Panc1 (cell line): ENCODE measurements at regions of chr1 and their contacts with region 1.

Region 1: DNA sequence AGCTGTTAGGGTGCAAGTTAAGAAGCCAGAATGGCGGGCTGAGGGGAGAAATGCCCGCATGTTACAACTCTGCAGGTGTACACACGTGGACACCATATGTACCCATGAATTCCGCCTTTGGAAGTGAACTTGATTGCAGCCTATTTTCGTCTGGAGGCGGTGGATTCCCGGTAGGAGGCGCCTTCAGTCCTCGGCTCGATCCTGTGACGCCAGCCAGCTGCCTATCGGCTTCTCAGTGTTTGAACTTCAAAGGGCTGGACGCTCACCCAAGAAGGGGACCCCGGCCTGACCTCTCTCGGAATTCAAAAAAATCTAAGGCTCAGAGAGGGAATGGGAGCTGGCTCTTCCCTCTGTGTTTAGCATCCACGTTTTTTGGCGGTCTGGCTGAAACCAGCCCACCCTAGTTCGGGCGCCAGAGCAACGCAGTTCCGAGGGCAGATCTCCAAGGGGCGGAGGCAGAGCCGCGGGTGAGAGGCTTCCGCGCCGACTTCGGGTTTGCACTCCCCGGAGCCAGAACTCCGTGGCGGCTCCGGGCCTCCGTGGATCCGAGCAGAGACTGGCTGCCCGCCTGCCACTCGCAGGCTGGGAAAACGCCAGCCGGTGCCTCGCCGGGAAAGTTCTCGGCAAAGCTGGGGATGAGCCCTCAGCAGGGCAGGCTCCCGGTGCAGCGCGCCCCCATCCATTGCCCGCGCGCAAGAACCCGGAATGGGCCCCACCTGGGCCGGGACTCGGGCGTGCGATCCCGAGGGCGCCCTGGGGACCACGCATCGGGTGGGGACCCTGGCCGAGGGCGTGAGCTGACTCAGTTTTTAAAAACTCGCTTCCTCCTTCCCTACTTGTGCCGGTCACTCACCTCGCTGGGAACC is 996 bp upstream of the TMEM51 start:
- DNase-seq: peak; percentile 69
- ATAC-seq: peak; percentile 63
- H3K4me3 ChIP-seq: peak overlapping the region; percentile 68 to 87
- H3K27ac ChIP-seq: peak overlapping the region; percentile 65; the same call in 1 of the 2 replicates
- H3K4me1 ChIP-seq: peaks cover 25% of the 10 kb centered on the region
- H3K27me3 ChIP-seq: no peaks in the 10 kb centered on the region
- CTCF ChIP-seq: peak; percentile 92

Region 2: GRCh38 chr1:15272009-15272788 is 119.6 kb after region 1 on chr1:
- CTCF ChIA-PET with region 1: interaction called, 10 read pairs
- POLR2A ChIA-PET with region 1: no interaction called
- in situ Hi-C with region 1: no loop called
- intact Hi-C with region 1: loop called (anchors 1 kb)
- DNase-seq: peak; percentile 69
- ATAC-seq: peak; percentile 97
- H3K4me3 ChIP-seq: peak overlapping the region; percentile 6 to 44; a peak in 3 of 4 replicates
- H3K27ac ChIP-seq: no peak overlapping the region
- H3K4me1 ChIP-seq: 0 out of 2 replicates have a peak, but pooled peaks cover 7% of the 10 kb centered on the region
- H3K27me3 ChIP-seq: no peaks in the 10 kb centered on the region
- CTCF ChIP-seq: peak; percentile 89

Region 3: GRCh38 chr1:15290382-15290781 is 137.8 kb after region 1 on chr1:
- CTCF ChIA-PET with region 1: no interaction called
- POLR2A ChIA-PET with region 1: no interaction called
- in situ Hi-C with region 1: no loop called
- intact Hi-C with region 1: no loop called
- DNase-seq: no peak
- ATAC-seq: no peak
- H3K4me3 ChIP-seq: no peak overlapping the region
- H3K27ac ChIP-seq: no peak overlapping the region
- H3K4me1 ChIP-seq: no peaks in the 10 kb centered on the region
- H3K27me3 ChIP-seq: no peaks in the 10 kb centered on the region
- CTCF ChIP-seq: no peak

Region 4: GRCh38 chr1:15328351-15329103 is 176.0 kb after region 1 on chr1:
- CTCF ChIA-PET with region 1: no interaction called
- POLR2A ChIA-PET with region 1: no interaction called
- in situ Hi-C with region 1: no loop called
- intact Hi-C with region 1: no loop called
- DNase-seq: no peak
- ATAC-seq: no peak
- H3K4me3 ChIP-seq: no peak overlapping the region
- H3K27ac ChIP-seq: no peak overlapping the region
- H3K4me1 ChIP-seq: 0 out of 2 replicates have a peak, but pooled peaks cover 2% of the 10 kb centered on the region
- H3K27me3 ChIP-seq: no peaks in the 10 kb centered on the region
- CTCF ChIP-seq: no peak